Natural killer cell (primary cell): ENCODE measurements at regions of chr2 and their contacts with region 1.

Region 1: DNA sequence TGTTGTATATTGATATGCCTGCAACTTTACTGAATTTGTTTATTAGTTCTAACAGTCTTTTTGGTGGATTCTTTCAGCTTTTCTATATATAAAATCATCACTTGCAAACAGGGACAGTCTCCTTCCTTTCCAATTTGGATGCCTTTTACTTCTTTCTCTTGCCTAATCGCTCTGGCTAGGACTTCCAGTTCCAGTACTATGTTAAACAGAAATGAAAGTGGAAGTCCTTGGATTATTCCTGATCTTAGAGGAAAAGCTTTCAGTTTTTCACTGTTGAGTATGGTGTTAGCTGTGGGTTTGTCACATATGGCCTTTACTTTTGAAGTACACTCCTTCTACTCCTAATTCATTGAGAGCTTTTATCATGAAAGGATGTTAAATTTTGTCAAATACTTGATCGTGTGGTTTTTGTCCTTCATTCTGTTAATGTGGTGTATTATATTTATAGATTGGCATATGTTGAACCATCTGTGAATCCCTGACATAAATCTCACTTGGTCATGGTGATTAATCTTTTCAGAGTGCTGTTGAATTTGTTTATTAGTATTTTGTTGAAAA is 52.9 kb downstream of the REL start:
- DNase-seq: no peak
- ATAC-seq: peak; percentile 21 to 65 (median 62)
- H3K4me3 ChIP-seq: no peak overlapping the region
- H3K4me3 Mint-ChIP-seq: no peak overlapping the region
- H3K27ac ChIP-seq: peak overlapping the region; percentile 42
- H3K27ac Mint-ChIP-seq: peak overlapping the region; percentile 75 to 78
- H3K4me1 ChIP-seq: peaks cover 10% of the 10 kb centered on the region
- H3K4me1 Mint-ChIP-seq: peaks cover 52 to 58% of the 10 kb centered on the region in 2 donors
- H3K27me3 ChIP-seq: no peaks in the 10 kb centered on the region
- H3K27me3 Mint-ChIP-seq: no peaks in the 10 kb centered on the region
- CTCF ChIP-seq: no peak

Region 2: GRCh38 chr2:60519231-60519863 is 414.9 kb before region 1 on chr2:
- intact Hi-C with region 1: no loop called
- DNase-seq: no peak
- ATAC-seq: no peak
- H3K4me3 ChIP-seq: no peak overlapping the region
- H3K4me3 Mint-ChIP-seq: no peak overlapping the region
- H3K27ac ChIP-seq: no peak overlapping the region
- H3K27ac Mint-ChIP-seq: no peak overlapping the region
- H3K4me1 ChIP-seq: peaks cover 14% of the 10 kb centered on the region
- H3K4me1 Mint-ChIP-seq: no peaks in the 10 kb centered on the region
- H3K27me3 ChIP-seq: no peaks in the 10 kb centered on the region
- H3K27me3 Mint-ChIP-seq: peaks cover 10 to 46% of the 10 kb centered on the region in 2 donors
- CTCF ChIP-seq: no peak

Region 3: DNA sequence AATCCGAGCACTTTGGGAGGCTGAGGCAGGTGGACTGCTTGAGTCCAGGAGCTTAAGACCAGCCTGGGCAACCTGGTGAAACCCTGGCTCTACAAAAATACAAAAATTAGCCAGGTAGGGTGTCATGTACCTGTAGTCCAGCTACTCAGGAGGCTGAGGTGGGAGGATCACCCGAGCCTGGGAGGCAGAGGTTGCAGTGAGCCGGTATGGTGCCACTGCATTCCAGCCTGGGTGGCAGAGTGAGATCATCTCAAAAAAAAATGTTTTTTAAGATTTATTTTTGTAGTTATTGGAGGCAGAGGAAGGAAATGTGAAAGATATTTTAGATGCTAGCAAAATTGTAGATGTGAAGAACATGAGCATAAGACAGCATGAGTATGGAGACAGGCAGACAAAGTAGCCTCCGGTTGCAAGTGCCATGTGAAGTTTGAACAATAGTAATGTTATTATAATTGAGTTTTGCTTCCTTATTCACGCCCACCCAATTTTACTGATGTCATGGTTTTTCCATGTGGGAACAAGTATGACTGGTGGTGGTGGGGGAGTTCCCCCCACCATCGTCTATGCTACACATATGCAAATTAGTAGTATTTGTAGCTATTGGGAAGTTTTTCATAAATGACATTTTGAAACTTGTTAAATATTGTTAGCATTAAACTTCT is 34.9 kb before region 1 on chr2:
- intact Hi-C with region 1: loop called (anchors 5 kb)
- DNase-seq: peak in 1 of 2 donors; percentile 37
- ATAC-seq: peak in 2 of 3 donors; percentile 21 to 54
- H3K4me3 ChIP-seq: no peak overlapping the region
- H3K4me3 Mint-ChIP-seq: peak overlapping the region; percentile 45
- H3K27ac ChIP-seq: no peak overlapping the region
- H3K27ac Mint-ChIP-seq: peak overlapping the region; percentile 4 to 36
- H3K4me1 ChIP-seq: peaks cover 4% of the 10 kb centered on the region
- H3K4me1 Mint-ChIP-seq: peaks cover 21 to 33% of the 10 kb centered on the region in 2 donors
- H3K27me3 ChIP-seq: no peaks in the 10 kb centered on the region
- H3K27me3 Mint-ChIP-seq: no peaks in the 10 kb centered on the region
- CTCF ChIP-seq: no peak

Region 4: DNA sequence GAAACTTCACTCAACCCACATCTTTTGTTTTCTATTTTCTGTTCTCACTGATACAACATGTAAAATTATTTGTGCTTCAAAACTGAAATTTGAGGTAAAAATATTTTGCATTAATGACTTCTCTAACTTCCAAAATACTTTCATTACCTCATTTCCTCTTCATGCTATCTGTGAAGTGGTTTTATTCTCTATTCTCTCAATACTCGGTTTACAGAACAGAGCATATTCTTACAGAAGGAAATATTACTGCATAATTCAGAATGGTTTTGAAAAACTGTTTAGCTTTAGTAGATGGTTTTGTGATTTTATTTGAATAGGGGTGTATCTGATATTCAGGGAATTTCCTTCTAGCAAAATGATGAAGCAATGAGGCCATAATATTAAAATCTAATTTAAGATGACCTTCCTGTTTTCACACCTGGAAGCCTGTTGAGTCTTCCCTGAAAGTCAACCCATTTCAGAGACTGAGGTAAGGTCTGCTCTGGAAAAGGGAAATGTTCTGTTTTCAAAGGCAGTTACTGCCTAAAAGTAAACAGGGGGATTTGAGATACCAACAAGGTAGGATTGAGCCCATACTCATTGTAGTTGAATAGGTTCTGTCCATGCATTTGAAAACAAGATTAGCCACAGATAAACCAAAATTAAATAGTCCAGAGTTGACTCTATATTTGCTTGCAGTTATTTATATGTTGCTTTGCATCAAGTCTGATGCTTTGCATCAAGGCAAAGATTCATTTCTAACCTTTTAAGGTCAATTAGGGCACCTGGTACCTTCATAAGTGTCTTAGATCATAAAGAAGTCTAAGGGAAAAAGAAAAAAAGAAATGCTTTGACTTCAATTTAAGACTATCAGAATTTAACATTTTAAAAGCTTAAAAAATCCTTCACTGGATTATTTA is 32.5 kb after region 1 on chr2:
- intact Hi-C with region 1: loop called (anchors 5 kb)
- DNase-seq: peak in 1 of 2 donors; percentile 12
- ATAC-seq: no peak
- H3K4me3 ChIP-seq: peak overlapping the region; percentile 3
- H3K4me3 Mint-ChIP-seq: peak overlapping the region; percentile 70
- H3K27ac ChIP-seq: peak overlapping the region; percentile 97
- H3K27ac Mint-ChIP-seq: peak overlapping the region; percentile 78 to 85
- H3K4me1 ChIP-seq: no peaks in the 10 kb centered on the region
- H3K4me1 Mint-ChIP-seq: peaks cover 23 to 34% of the 10 kb centered on the region in 2 donors
- H3K27me3 ChIP-seq: no peaks in the 10 kb centered on the region
- H3K27me3 Mint-ChIP-seq: no peaks in the 10 kb centered on the region
- CTCF ChIP-seq: no peak